ENCODE measurements at regions of chr15 and their contacts with region 1.

Region 1: DNA sequence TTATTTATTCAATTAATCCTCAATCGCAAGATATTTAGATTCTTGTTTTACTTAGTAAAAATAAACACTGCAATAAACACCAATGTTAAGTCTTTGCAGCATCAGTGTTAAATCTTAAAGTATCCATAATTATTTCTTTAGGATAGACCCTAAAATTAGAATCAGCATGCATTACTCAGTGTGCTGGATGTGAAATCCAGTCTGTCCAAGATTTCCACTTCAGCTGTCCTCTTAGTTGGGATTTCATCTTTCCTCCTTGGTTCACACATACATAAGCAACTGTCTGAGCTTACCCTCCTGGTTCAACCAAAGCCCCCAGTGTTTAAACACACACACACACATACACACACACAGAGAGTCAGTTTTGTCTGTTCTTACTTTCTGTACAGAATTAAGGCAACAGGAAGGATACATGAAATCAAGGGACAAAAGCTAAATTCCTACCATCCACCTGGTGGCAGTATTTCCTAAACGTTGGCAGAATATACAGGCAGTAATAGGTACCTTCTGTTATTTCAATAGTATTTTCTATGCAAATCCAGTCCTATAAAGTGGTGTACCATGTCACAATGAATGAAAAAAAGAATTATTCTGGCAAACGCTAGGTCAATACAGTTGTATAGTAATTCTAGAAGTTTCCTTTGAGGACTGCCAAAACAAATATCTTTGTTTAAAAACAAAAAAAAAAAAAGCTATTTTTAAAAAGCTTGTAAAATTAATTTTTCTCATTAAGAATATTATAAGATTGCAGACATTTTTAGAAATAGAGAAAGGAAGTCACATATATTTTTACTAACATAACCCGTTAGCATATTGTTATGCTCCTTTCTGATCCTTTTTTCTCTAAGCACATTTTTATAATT is 27.3 kb upstream of the DMXL2 start:
- DNase-seq: no peak
- ATAC-seq: peak; percentile 71

Region 2: GRCh38 chr15:51573894-51574293 is 76.0 kb before region 1 on chr15:
- intact Hi-C with region 1: no loop called
- DNase-seq: no peak
- ATAC-seq: no peak

Region 3: GRCh38 chr15:51759557-51760070 is 109.7 kb after region 1 on chr15:
- intact Hi-C with region 1: loop called (anchors 5 kb)
- DNase-seq: no peak
- ATAC-seq: peak; percentile 91

Region 4: GRCh38 chr15:51776952-51777574 is 127.2 kb after region 1 on chr15:
- intact Hi-C with region 1: loop called (anchors 1 kb)
- DNase-seq: no peak
- ATAC-seq: peak; percentile 89